ENCODE measurements at regions of chr3 and their contacts with region 1.

Region 1: DNA sequence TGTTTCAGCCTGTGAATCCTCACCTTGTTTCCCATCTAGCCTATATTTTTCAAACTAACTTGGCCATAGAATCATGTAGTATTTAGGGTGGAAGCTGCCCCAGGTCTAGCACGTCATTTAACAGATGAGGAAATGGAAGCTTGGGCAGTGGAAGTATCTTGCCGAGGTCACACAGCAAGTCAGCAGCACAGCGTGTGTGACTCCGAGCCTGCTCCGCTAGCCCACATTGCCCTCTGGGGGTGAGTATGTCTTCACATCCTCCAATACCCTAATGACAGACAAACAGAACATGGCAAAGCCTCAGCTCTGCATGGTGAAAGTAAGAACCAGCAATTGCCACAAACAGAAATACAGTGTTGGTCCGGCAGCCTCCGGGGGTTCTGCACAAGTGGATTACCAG is 2.2 kb upstream of the CCR5 start:
- DNase-seq: peak; percentile 79
- ATAC-seq: peak; percentile 55
- H3K4me3 Mint-ChIP-seq: no peak overlapping the region
- H3K27ac Mint-ChIP-seq: peak overlapping the region; percentile 79
- H3K4me1 Mint-ChIP-seq: peaks cover 43% of the 10 kb centered on the region
- H3K27me3 Mint-ChIP-seq: peaks cover 6% of the 10 kb centered on the region
- CTCF ChIP-seq: peak; percentile 44

Region 2: GRCh38 chr3:46006238-46007032 is 362.1 kb before region 1 on chr3:
- CTCF ChIA-PET with region 1: no interaction called
- POLR2A ChIA-PET with region 1: no interaction called
- intact Hi-C with region 1: no loop called
- DNase-seq: no peak
- ATAC-seq: no peak
- H3K4me3 Mint-ChIP-seq: no peak overlapping the region
- H3K27ac Mint-ChIP-seq: no peak overlapping the region
- H3K4me1 Mint-ChIP-seq: peaks cover 12% of the 10 kb centered on the region
- H3K27me3 Mint-ChIP-seq: peaks cover 2% of the 10 kb centered on the region
- CTCF ChIP-seq: no peak

Region 3: DNA sequence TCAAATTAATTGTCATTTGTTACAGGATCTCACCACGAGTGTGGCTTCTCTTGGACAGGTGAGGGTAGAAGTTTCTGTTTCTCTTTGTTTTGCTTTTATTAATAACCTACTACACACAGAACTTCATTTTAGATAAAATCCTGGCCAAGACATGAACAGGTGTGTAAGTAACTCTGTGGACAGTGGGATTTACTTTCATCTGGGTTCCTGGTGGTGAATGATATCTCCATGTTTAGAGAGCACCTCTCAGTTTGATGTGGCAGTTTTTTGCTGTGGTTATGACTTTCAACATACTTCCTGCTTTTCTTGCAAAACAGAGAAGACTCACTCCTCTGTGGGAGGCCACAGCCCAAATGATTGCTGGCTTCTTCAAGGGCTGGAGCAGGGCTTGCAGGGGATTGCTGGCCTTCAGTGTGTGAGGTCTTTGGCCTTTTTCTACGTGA is 270.2 kb before region 1 on chr3:
- CTCF ChIA-PET with region 1: interaction called, 17 read pairs
- POLR2A ChIA-PET with region 1: interaction called, 4 read pairs
- intact Hi-C with region 1: loop called (anchors 5 kb)
- DNase-seq: peak; percentile 76
- ATAC-seq: peak; percentile 54
- H3K4me3 Mint-ChIP-seq: peak overlapping the region; percentile 10
- H3K27ac Mint-ChIP-seq: peak overlapping the region; percentile 87
- H3K4me1 Mint-ChIP-seq: peaks cover 41% of the 10 kb centered on the region
- H3K27me3 Mint-ChIP-seq: peaks cover 25% of the 10 kb centered on the region
- CTCF ChIP-seq: no peak

Region 4: GRCh38 chr3:46214751-46215352 is 153.7 kb before region 1 on chr3:
- CTCF ChIA-PET with region 1: interaction called, 65 read pairs
- POLR2A ChIA-PET with region 1: interaction called, 4 read pairs
- intact Hi-C with region 1: no loop called
- DNase-seq: peak; percentile 51
- ATAC-seq: no peak
- H3K4me3 Mint-ChIP-seq: no peak overlapping the region
- H3K27ac Mint-ChIP-seq: no peak overlapping the region
- H3K4me1 Mint-ChIP-seq: peaks cover 4% of the 10 kb centered on the region
- H3K27me3 Mint-ChIP-seq: no peaks in the 10 kb centered on the region
- CTCF ChIP-seq: peak; percentile 15

Region 5: DNA sequence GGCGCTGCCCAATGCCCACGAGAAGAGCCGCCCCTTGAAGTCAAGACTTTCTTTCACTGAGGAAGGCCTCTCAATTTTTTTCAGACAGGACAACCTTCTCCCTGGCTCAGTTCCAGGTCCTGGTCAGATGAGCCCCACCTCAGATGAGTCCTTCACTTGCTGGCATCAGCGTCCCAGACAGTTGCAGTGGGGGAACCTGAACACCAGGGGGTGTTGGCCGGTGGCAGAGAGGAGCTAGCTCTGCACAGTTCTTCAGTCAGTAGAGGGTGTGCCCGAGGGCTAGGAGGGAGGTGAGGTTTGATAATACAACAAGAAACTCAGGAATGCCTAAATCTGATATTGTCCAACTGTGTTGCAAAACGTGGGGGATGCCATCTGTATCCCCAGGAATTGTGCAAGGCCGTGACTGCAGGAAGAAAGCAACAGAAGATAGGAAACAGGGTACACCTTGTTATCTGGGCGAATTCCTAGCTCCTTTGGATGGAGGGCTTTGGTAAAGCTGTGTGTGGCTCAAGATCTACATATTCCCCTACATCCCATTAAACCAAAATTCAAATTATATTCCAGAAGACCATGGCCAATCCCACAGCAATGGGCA is 92.0 kb before region 1 on chr3:
- CTCF ChIA-PET with region 1: interaction called, 156 read pairs
- POLR2A ChIA-PET with region 1: interaction called, 21 read pairs
- intact Hi-C with region 1: loop called (anchors 5 kb)
- DNase-seq: peak; percentile 86
- ATAC-seq: peak; percentile 81
- H3K4me3 Mint-ChIP-seq: no peak overlapping the region
- H3K27ac Mint-ChIP-seq: no peak overlapping the region
- H3K4me1 Mint-ChIP-seq: peaks cover 41% of the 10 kb centered on the region
- H3K27me3 Mint-ChIP-seq: peaks cover 5% of the 10 kb centered on the region
- CTCF ChIP-seq: peak; percentile 87

Region 6: GRCh38 chr3:46297658-46298463 is 70.7 kb before region 1 on chr3:
- CTCF ChIA-PET with region 1: interaction called, 54 read pairs
- POLR2A ChIA-PET with region 1: interaction called, 25 read pairs
- intact Hi-C with region 1: loop called (anchors 5 kb)
- DNase-seq: no peak
- ATAC-seq: no peak
- H3K4me3 Mint-ChIP-seq: no peak overlapping the region
- H3K27ac Mint-ChIP-seq: peak overlapping the region; percentile 87
- H3K4me1 Mint-ChIP-seq: peaks cover 87% of the 10 kb centered on the region
- H3K27me3 Mint-ChIP-seq: peaks cover 4% of the 10 kb centered on the region
- CTCF ChIP-seq: no peak

Region 7: GRCh38 chr3:46393052-46393451 is 24.5 kb after region 1 on chr3:
- CTCF ChIA-PET with region 1: no interaction called
- POLR2A ChIA-PET with region 1: no interaction called
- intact Hi-C with region 1: no loop called
- DNase-seq: no peak
- ATAC-seq: no peak
- H3K4me3 Mint-ChIP-seq: no peak overlapping the region
- H3K27ac Mint-ChIP-seq: no peak overlapping the region
- H3K4me1 Mint-ChIP-seq: peaks cover 10% of the 10 kb centered on the region
- H3K27me3 Mint-ChIP-seq: peaks cover 4% of the 10 kb centered on the region
- CTCF ChIP-seq: no peak

Region 8: GRCh38 chr3:47306022-47306421 is 937.5 kb after region 1 on chr3:
- CTCF ChIA-PET with region 1: no interaction called
- POLR2A ChIA-PET with region 1: no interaction called
- intact Hi-C with region 1: no loop called
- DNase-seq: no peak
- ATAC-seq: no peak
- H3K4me3 Mint-ChIP-seq: no peak overlapping the region
- H3K27ac Mint-ChIP-seq: no peak overlapping the region
- H3K4me1 Mint-ChIP-seq: peaks cover 24% of the 10 kb centered on the region
- H3K27me3 Mint-ChIP-seq: no peaks in the 10 kb centered on the region
- CTCF ChIP-seq: no peak

Measured in activated CD8-positive, alpha-beta T cell treated with anti-CD3 and anti-CD28 coated beads for 36 hours (primary cell).